ENCODE measurements at regions of chr12 and their contacts with region 1.

Region 1: GRCh38 chr12:55659486-55660385 is 23.0 kb downstream of the OR10P1 start:
- DNase-seq: no peak
- ATAC-seq: peak; percentile 85
- H3K4me3 ChIP-seq: no peak overlapping the region
- H3K27ac ChIP-seq: no peak overlapping the region
- H3K4me1 ChIP-seq: no peaks in the 10 kb centered on the region
- H3K27me3 ChIP-seq: no peaks in the 10 kb centered on the region
- CTCF ChIP-seq: peak; percentile 50 to 66 (median 66)
- EP300 ChIP-seq: no peak
- POLR2A ChIP-seq: no peak
- RAD21 ChIP-seq: peak; percentile 84

Region 2: DNA sequence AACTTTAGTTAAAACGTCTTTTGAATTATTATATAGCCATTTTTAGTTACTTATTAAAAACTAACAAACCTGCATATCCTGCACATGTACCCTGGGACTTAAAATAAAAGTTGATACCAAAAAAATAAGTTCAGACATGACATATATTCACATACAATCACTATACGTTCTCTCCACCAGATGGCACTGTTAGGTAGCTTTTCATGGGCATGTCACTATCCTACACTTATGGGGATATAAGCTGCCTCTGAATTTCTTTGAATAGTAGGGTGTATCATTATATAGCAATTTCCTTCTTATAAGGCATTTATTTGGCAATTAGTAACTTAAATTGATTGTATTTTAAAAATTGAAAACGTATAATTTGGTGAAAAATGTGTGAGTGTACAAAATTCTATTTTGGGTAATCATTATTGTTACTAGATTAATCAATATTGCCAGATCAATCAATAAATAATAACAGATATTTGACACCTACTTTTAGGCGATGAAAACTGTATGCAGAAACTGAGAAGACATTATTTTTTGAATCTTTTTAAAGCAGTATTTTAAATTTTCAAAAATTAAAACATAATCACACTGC is 470.7 kb before region 1 on chr12:
- CTCF ChIA-PET with region 1: interaction called, 13 read pairs
- POLR2A ChIA-PET with region 1: no interaction called
- RAD21 ChIA-PET with region 1: interaction called, 9 read pairs
- SMC1A ChIA-PET with region 1: interaction called, 5 read pairs
- in situ Hi-C with region 1: no loop called
- intact Hi-C with region 1: loop called (anchors 1 kb)
- DNase-seq: peak; percentile 53
- ATAC-seq: peak; percentile 92
- H3K4me3 ChIP-seq: no peak overlapping the region
- H3K27ac ChIP-seq: no peak overlapping the region
- H3K4me1 ChIP-seq: no peaks in the 10 kb centered on the region
- H3K27me3 ChIP-seq: no peaks in the 10 kb centered on the region
- CTCF ChIP-seq: peak; percentile 50 to 68 (median 53); a peak in 5 of 6 replicates
- EP300 ChIP-seq: no peak
- POLR2A ChIP-seq: no peak
- RAD21 ChIP-seq: peak; percentile 88

Region 3: DNA sequence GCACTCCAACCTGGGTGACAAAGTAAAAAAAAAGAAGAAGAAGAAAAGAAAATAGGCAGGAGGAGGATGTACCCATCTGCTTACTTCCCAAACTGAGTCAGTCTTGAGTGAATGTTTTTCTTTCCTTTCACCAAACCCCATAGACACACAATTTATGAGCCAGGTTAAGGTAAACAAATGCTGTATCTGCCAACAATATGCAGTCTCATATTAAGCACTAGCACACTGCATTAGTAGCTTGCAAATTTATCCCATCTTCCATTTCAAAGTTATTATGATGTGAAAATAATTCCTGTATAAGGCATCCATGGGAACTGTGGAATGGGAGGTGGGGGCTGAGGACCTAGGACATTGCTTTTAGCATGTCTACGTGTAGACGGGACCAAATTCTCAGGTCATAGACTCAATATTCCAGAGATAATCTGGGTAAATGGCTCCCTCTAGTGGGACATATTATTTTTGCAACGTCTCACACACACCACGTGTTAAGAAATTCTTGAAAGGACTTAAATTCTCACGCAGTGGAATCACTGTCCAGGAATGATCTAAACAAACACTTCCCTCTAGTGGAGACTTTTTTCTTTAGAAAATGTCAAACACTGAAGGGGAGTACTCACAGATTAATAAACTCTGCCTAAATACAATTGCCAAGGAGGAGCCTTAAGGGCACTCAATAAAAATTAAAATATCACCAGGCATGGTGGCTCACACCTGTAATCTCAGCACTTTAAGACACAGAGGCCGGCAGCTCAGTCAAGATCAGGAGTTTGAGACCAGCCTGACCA is 40.2 kb before region 1 on chr12:
- CTCF ChIA-PET with region 1: interaction called, 16 read pairs
- POLR2A ChIA-PET with region 1: no interaction called
- RAD21 ChIA-PET with region 1: interaction called, 6 read pairs
- SMC1A ChIA-PET with region 1: interaction called, 11 read pairs
- in situ Hi-C with region 1: no loop called
- intact Hi-C with region 1: no loop called
- DNase-seq: peak; percentile 74
- ATAC-seq: peak; percentile 85
- H3K4me3 ChIP-seq: no peak overlapping the region
- H3K27ac ChIP-seq: no peak overlapping the region
- H3K4me1 ChIP-seq: no peaks in the 10 kb centered on the region
- H3K27me3 ChIP-seq: no peaks in the 10 kb centered on the region
- CTCF ChIP-seq: peak; percentile 62 to 88 (median 85)
- EP300 ChIP-seq: no peak
- POLR2A ChIP-seq: no peak
- RAD21 ChIP-seq: peak; percentile 89

Region 4: DNA sequence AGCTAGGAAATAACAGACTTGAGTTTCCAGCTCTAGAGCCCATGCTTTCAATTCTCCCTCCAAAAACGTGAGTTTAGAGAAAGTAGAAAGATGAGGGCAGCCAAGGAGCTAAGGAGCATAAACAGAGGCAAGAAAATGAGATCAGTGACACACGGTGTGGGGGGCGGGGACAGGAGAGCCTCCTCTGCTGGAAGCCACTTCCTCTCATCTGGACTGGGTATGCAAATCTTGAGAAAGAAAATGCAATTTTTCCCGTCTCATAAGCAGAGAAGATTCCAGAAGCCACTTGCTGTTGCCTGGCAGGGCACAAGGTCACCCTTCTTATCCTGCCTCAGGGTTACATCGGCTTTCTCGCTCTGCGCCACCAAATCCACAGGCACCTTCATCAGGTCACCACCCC is 17.1 kb before region 1 on chr12:
- CTCF ChIA-PET with region 1: interaction called, 109 read pairs
- POLR2A ChIA-PET with region 1: no interaction called
- RAD21 ChIA-PET with region 1: interaction called, 7 read pairs
- SMC1A ChIA-PET with region 1: interaction called, 35 read pairs
- in situ Hi-C with region 1: no loop called
- intact Hi-C with region 1: no loop called
- DNase-seq: no peak
- ATAC-seq: no peak
- H3K4me3 ChIP-seq: no peak overlapping the region
- H3K27ac ChIP-seq: no peak overlapping the region
- H3K4me1 ChIP-seq: peaks cover 20% of the 10 kb centered on the region
- H3K27me3 ChIP-seq: no peaks in the 10 kb centered on the region
- CTCF ChIP-seq: no peak
- EP300 ChIP-seq: no peak
- POLR2A ChIP-seq: no peak
- RAD21 ChIP-seq: no peak

Region 5: GRCh38 chr12:55673638-55674037 is 13.9 kb after region 1 on chr12:
- CTCF ChIA-PET with region 1: interaction called, 16 read pairs
- POLR2A ChIA-PET with region 1: no interaction called
- RAD21 ChIA-PET with region 1: interaction called, 11 read pairs
- SMC1A ChIA-PET with region 1: interaction called, 8 read pairs
- in situ Hi-C with region 1: no loop called
- intact Hi-C with region 1: no loop called
- DNase-seq: peak; percentile 76
- ATAC-seq: peak; percentile 100
- H3K4me3 ChIP-seq: 0 out of 2 replicates have a peak overlapping the region, but pooled peaks have one; percentile 16
- H3K27ac ChIP-seq: peak overlapping the region; percentile 62; the same call in 1 of the 2 replicates
- H3K4me1 ChIP-seq: peaks cover 10% of the 10 kb centered on the region
- H3K27me3 ChIP-seq: no peaks in the 10 kb centered on the region
- CTCF ChIP-seq: no peak
- EP300 ChIP-seq: no peak
- POLR2A ChIP-seq: peak; percentile 43; the same call in 1 of the 2 replicates
- RAD21 ChIP-seq: no peak

Region 6: GRCh38 chr12:55687746-55688145 is 28.0 kb after region 1 on chr12:
- CTCF ChIA-PET with region 1: no interaction called
- POLR2A ChIA-PET with region 1: no interaction called
- RAD21 ChIA-PET with region 1: no interaction called
- SMC1A ChIA-PET with region 1: no interaction called
- in situ Hi-C with region 1: no loop called
- intact Hi-C with region 1: no loop called
- DNase-seq: no peak
- ATAC-seq: peak; percentile 76
- H3K4me3 ChIP-seq: no peak overlapping the region
- H3K27ac ChIP-seq: no peak overlapping the region
- H3K4me1 ChIP-seq: peaks cover 6% of the 10 kb centered on the region
- H3K27me3 ChIP-seq: no peaks in the 10 kb centered on the region; a peak in 1 of 4 replicates
- CTCF ChIP-seq: no peak
- EP300 ChIP-seq: no peak
- POLR2A ChIP-seq: no peak
- RAD21 ChIP-seq: no peak

Region 7: DNA sequence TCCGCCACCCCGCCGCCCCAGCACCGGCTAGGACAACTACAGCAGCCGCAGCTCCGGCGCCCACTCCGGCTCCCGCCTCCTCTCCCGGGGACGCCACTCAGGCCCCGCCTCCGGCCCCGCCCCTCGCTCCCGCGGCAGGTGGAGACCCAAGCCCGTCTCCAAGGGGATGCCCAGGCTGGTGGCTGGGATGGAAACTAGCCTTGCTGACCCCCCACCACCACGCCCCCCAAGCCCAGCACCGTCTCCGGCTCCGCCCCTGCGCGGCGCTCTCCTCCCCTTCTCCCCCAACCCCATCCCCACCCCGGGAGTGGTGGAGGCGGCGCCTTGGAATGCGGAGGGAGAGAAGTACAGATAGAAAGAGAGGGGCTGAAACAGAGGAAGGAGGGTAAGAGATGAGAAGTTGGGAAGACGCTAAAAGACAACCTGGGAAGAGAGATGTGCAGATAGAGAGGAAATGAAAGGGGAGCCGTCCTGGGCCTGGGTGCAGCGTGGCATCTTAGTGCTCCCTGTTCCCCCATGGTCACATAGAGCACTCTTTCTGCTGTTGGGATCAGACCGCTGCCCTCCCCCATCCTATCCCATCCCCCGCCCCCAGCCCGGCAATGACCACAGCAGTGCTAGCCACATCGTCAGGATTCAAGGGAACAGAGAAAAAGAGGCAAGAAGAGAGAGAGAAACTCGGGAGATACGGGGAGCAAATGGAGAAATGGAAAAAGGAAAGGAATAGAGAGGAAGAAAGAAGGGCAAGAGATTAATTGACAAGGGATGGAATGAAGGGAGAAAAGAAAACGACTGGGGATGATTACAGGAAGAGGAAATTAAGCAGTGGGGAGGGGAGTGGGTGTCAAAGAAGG is 48.3 kb after region 1 on chr12 and contains the start of gene ITGA7:
- CTCF ChIA-PET with region 1: interaction called, 13 read pairs
- POLR2A ChIA-PET with region 1: interaction called, 3 read pairs
- RAD21 ChIA-PET with region 1: no interaction called
- SMC1A ChIA-PET with region 1: interaction called, 9 read pairs
- in situ Hi-C with region 1: no loop called
- intact Hi-C with region 1: no loop called
- DNase-seq: no peak
- ATAC-seq: peak; percentile 71
- H3K4me3 ChIP-seq: peak within 1 kb of the TSS; percentile 74
- H3K27ac ChIP-seq: no peak within 1 kb of the TSS
- H3K4me1 ChIP-seq: peaks cover 6% of the 10 kb centered on the region; the same call in 1 of the 2 replicates
- H3K27me3 ChIP-seq: peaks cover 0 to 5% of the 10 kb centered on the region in 2 experiments; a peak in 2 of 4 replicates
- CTCF ChIP-seq: no peak
- EP300 ChIP-seq: no peak
- POLR2A ChIP-seq: no peak
- RAD21 ChIP-seq: no peak
- polyA plus RNA-seq, gene ITGA7: 0.18 to 0.39 TPM

Region 8: DNA sequence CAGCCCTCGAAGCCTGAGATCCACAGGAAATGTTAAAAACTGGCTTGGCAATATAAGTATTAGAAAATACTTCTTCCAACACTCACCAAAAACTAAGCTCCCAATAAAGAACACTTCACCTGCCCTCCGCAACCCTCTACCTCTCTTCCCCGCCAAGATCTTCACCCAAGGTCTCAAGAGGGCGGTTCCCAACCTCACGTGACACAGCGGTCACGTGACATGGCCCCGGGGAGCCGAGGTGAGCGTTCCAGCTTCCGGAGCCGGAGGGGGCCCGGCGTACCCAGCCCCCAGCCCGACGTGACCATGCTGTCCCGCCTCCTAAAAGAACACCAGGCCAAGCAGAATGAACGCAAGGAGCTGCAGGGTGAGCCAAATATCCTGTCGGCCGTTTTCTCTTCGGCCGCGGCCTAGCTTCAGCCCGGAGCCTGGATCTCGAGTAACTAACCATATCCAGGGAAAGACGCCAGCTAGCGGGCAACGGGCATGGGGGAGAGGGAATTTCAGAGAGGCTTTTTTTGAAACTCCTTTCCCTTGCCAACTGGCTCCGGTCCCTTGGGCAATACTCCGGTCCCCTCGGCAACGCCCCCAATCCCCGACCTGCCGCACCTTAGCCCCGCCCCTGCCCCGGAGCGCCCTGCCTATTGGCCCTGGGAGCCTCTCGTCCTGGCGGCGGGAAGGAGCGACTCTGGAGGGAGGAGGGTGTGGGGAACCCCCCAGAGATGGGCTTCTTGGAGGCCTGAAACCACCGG is 56.3 kb after region 1 on chr12 and contains the start of gene BLOC1S1:
- CTCF ChIA-PET with region 1: interaction called, 23 read pairs
- POLR2A ChIA-PET with region 1: interaction called, 5 read pairs
- RAD21 ChIA-PET with region 1: interaction called, 7 read pairs
- SMC1A ChIA-PET with region 1: interaction called, 4 read pairs
- in situ Hi-C with region 1: no loop called
- intact Hi-C with region 1: loop called (anchors 1 kb)
- DNase-seq: peak; percentile 73
- ATAC-seq: peak; percentile 95
- H3K4me3 ChIP-seq: peak within 1 kb of the TSS; percentile 81
- H3K27ac ChIP-seq: peak within 1 kb of the TSS; percentile 95
- H3K4me1 ChIP-seq: peaks cover 20% of the 10 kb centered on the region
- H3K27me3 ChIP-seq: no peaks in the 10 kb centered on the region
- CTCF ChIP-seq: no peak
- EP300 ChIP-seq: no peak
- POLR2A ChIP-seq: peak; percentile 74
- RAD21 ChIP-seq: 0 out of 2 replicates have a peak, but pooled peaks have one; percentile 26
- polyA plus RNA-seq, gene BLOC1S1: 264 to 285 TPM